Activated B cell treated with CpG ODN at 0.5 μM for 24 hours (primary cell): ENCODE measurements at regions of chr17 and their contacts with region 1.

Region 1: GRCh38 chr17:68457539-68458259 is 403 bp upstream of the WIPI1 start:
- DNase-seq: peak; percentile 97
- ATAC-seq: peak; percentile 98
- H3K4me3 Mint-ChIP-seq: peak overlapping the region; percentile 84
- H3K27ac Mint-ChIP-seq: peak overlapping the region; percentile 78
- H3K4me1 Mint-ChIP-seq: peaks cover 21% of the 10 kb centered on the region
- H3K27me3 Mint-ChIP-seq: no peaks in the 10 kb centered on the region
- CTCF ChIP-seq: no peak

Region 2: GRCh38 chr17:67717624-67718329 is 739.9 kb before region 1 on chr17 and contains the start of gene NOL11:
- CTCF ChIA-PET with region 1: no interaction called
- POLR2A ChIA-PET with region 1: interaction called, 4 read pairs
- intact Hi-C with region 1: loop called (anchors 1 kb)
- DNase-seq: peak; percentile 98
- ATAC-seq: peak; percentile 94
- H3K4me3 Mint-ChIP-seq: peak within 1 kb of the TSS; percentile 100
- H3K27ac Mint-ChIP-seq: peak within 1 kb of the TSS; percentile 99
- H3K4me1 Mint-ChIP-seq: peaks cover 30% of the 10 kb centered on the region
- H3K27me3 Mint-ChIP-seq: no peaks in the 10 kb centered on the region
- CTCF ChIP-seq: no peak
- total RNA-seq, gene NOL11: 67.9 and 70.6 TPM in 2 replicates

Region 3: GRCh38 chr17:68019675-68020408 is 437.9 kb before region 1 on chr17:
- CTCF ChIA-PET with region 1: no interaction called
- POLR2A ChIA-PET with region 1: interaction called, 3 read pairs
- intact Hi-C with region 1: loop called (anchors 1 kb)
- DNase-seq: peak; percentile 99
- ATAC-seq: peak; percentile 90
- H3K4me3 Mint-ChIP-seq: peak overlapping the region; percentile 90
- H3K27ac Mint-ChIP-seq: peak overlapping the region; percentile 90
- H3K4me1 Mint-ChIP-seq: peaks cover 14% of the 10 kb centered on the region
- H3K27me3 Mint-ChIP-seq: peaks cover 2% of the 10 kb centered on the region
- CTCF ChIP-seq: no peak

Region 4: DNA sequence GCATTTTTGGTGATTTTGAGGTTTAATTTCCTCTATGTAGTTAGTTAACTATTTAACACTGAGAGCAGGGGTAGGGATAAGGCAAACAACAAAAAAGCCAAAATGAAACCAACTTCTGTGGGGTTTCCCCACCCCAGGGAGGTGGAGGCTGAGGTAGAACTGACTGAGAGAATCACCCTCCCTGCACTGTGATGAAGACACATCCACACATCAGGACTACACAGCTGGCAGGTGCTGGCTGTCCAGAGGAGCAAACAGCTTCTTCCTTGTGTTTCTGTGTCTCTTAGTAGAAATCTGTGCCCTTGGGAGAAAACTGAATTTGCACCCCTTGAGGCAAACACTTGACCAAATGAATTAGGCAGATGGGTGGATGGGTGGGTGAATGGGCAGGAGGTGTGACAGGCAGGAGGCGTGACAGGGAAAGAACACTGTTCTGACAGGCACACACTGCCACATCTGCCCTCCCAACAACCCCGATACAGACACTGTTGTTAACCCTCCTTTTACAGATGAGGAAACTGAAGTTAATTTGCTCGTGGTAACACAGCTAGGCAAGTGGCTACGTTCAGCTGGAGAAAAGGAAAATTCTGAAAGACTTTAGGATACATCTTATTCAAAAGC is 272.8 kb before region 1 on chr17:
- CTCF ChIA-PET with region 1: interaction called, 3 read pairs
- POLR2A ChIA-PET with region 1: interaction called, 19 read pairs
- intact Hi-C with region 1: no loop called
- DNase-seq: no peak
- ATAC-seq: peak; percentile 69
- H3K4me3 Mint-ChIP-seq: peak overlapping the region; percentile 62
- H3K27ac Mint-ChIP-seq: peak overlapping the region; percentile 91
- H3K4me1 Mint-ChIP-seq: peaks cover 66% of the 10 kb centered on the region
- H3K27me3 Mint-ChIP-seq: no peaks in the 10 kb centered on the region
- CTCF ChIP-seq: no peak

Region 5: DNA sequence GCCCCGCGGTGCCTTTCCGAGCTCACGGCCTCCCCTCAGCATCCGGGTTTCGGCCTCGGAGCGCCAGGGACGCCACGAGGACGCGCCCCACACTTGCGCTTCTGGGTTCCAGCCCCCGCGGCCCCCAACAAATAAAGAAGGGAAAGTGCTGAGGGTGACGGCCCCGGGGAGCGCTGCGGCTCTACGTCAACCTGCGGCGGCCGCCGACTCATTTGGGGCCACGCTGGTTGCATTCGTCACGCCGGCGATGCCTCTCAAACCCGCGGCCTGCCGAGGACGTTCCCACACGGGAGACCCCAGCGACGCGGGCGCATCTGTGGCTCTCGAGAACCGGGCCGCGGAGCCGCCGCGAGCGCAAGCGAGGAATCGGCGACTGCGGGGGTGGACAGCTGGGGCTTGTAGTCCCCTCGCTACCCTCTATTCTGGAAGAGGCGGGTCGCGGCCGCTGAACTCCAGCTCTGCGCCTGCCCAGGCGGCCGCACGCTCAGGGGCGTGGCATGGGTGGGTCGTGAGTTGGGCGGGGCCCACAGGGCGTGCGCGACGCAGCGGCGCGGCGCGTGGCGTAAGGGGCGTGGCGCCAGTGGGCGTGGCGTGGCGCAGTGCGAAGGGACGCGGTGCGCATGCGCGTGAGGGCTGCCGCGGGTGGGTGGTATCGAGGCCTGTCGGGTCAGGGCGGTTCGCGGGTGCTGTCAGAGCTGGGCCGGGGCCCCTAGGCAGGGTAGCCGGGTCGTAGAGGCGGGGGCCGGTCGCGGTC is 210.1 kb before region 1 on chr17 and contains the start of gene AMZ2:
- CTCF ChIA-PET with region 1: interaction called, 3 read pairs
- POLR2A ChIA-PET with region 1: interaction called, 31 read pairs
- intact Hi-C with region 1: loop called (anchors 1 kb)
- DNase-seq: peak; percentile 100
- ATAC-seq: peak; percentile 87
- H3K4me3 Mint-ChIP-seq: peak within 1 kb of the TSS; percentile 92
- H3K27ac Mint-ChIP-seq: peak within 1 kb of the TSS; percentile 95
- H3K4me1 Mint-ChIP-seq: peaks cover 53% of the 10 kb centered on the region
- H3K27me3 Mint-ChIP-seq: no peaks in the 10 kb centered on the region
- CTCF ChIP-seq: no peak
- total RNA-seq, gene AMZ2: 42.1 and 55.4 TPM in 2 replicates

Region 6: GRCh38 chr17:68512247-68512982 is 54.7 kb after region 1 on chr17 and contains the start of gene PRKAR1A:
- CTCF ChIA-PET with region 1: interaction called, 4 read pairs
- POLR2A ChIA-PET with region 1: interaction called, 24 read pairs
- intact Hi-C with region 1: no loop called
- DNase-seq: peak; percentile 92
- ATAC-seq: peak; percentile 77
- H3K4me3 Mint-ChIP-seq: peak within 1 kb of the TSS; percentile 100
- H3K27ac Mint-ChIP-seq: peak within 1 kb of the TSS; percentile 100
- H3K4me1 Mint-ChIP-seq: peaks cover 39% of the 10 kb centered on the region
- H3K27me3 Mint-ChIP-seq: no peaks in the 10 kb centered on the region
- CTCF ChIP-seq: no peak
- total RNA-seq, gene PRKAR1A: 272 and 279 TPM in 2 replicates

Region 7: DNA sequence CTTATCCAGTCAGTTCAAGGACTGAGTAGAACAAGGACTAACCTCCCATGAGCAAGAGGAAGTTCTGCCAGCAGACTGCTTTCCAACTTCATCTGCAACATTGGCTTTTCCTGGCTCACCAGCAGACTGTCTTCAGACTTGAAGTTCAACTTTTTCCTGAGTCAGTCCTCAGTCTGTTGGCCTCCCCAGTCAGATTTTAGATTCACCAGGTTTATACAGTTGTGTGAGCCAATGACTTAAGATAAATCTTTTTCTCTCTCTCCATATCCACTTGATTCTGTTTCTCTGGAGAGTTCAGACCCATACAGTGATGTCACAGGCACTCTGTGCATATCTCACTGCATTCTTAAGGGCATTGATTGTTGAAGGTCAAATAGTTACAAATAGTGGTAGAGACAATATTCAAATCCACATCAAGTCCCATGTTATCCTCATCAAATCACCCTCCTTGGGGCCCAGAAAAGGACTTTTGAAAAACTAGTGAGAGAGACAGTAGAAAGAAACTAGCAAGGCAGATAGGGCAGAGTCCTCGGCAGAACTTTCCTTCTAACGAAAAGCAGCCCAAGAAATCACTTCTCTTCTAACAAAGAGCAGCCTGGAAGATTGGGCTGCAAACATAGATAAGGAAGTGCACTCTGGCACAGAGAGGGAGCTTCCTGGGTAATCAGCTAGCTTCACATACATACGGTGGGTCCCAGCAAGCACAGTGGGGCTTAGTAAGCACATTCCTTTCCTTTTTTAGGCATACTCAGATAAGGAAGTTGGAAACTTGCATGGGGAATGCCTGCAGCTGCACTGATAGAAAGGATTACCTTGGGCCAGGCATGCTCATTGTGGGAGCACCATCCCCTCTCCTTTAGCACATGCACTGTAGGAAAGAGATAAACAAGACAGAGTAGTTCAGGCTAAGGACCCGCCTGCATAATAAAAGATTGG is 275.8 kb after region 1 on chr17:
- CTCF ChIA-PET with region 1: no interaction called
- POLR2A ChIA-PET with region 1: no interaction called
- intact Hi-C with region 1: no loop called
- DNase-seq: no peak
- ATAC-seq: no peak
- H3K4me3 Mint-ChIP-seq: no peak overlapping the region
- H3K27ac Mint-ChIP-seq: no peak overlapping the region
- H3K4me1 Mint-ChIP-seq: no peaks in the 10 kb centered on the region
- H3K27me3 Mint-ChIP-seq: peaks cover 5% of the 10 kb centered on the region
- CTCF ChIP-seq: no peak